PC-3 (cell line): ENCODE measurements at regions of chr3 and their contacts with region 1.

Region 1: GRCh38 chr3:170180908-170181879 is at the start of gene PHC3:
- DNase-seq: peak; percentile 93
- ATAC-seq: peak; percentile 81
- H3K4me3 ChIP-seq: peak within 1 kb of the TSS; percentile 75
- H3K27ac ChIP-seq: peak within 1 kb of the TSS; percentile 47
- H3K4me1 ChIP-seq: peaks cover 16% of the 10 kb centered on the region
- H3K27me3 ChIP-seq: no peaks in the 10 kb centered on the region
- CTCF ChIP-seq: no peak
- total RNA-seq, gene PHC3: 7.5 and 16.2 TPM in 2 replicates

Region 2: DNA sequence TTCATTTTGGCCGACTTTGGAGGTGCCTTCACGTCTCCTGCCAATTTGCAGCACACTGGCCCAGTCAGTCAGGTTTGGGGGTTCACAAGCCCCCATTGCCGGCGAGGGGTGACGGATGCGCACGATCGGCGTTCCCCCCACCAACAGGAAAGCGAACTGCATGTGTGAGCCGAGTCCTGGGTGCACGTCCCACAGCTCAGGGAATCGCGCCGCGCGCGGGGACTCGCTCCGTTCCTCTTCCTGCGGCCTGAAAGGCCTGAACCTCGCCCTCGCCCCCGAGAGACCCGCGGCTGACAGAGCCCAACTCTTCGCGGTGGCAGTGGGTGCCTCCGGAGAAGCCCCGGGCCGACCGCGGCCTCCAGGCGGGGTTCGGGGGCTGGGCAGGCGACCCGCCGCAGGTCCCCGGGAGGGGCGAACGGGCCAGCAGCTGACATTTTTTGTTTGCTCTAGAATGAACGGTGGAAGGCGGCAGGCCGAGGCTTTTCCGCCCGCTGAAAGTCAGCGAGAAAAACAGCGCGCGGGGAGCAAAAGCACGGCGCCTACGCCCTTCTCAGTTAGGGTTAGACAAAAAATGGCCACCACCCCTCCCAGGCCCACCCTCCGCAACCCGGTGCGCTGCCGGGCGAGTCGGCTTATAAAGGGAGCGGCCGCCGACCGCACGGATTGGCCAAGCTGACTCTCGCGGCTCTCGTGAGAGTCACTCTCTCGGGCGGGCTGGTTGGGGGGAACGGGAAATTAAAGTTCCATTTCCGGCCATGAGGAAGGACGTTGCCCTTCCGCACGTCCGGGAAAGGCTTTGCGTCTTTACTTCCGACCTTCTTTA is 416.5 kb before region 1 on chr3 and contains the start of gene TERC:
- CTCF ChIA-PET with region 1: no interaction called
- POLR2A ChIA-PET with region 1: no interaction called
- intact Hi-C with region 1: loop called (anchors 1 kb)
- DNase-seq: peak; percentile 97
- ATAC-seq: peak; percentile 85
- H3K4me3 ChIP-seq: peak within 1 kb of the TSS; percentile 81
- H3K27ac ChIP-seq: peak within 1 kb of the TSS; percentile 82
- H3K4me1 ChIP-seq: peaks cover 9% of the 10 kb centered on the region
- H3K27me3 ChIP-seq: no peaks in the 10 kb centered on the region
- CTCF ChIP-seq: no peak
- total RNA-seq, gene TERC: 544 and 737 TPM in 2 replicates

Region 3: GRCh38 chr3:170196833-170197232 is 15.6 kb after region 1 on chr3:
- CTCF ChIA-PET with region 1: no interaction called
- POLR2A ChIA-PET with region 1: no interaction called
- intact Hi-C with region 1: no loop called
- DNase-seq: peak; percentile 67
- ATAC-seq: peak; percentile 89
- H3K4me3 ChIP-seq: no peak overlapping the region
- H3K27ac ChIP-seq: no peak overlapping the region
- H3K4me1 ChIP-seq: peaks cover 8% of the 10 kb centered on the region; the same call in 1 of the 2 replicates
- H3K27me3 ChIP-seq: no peaks in the 10 kb centered on the region
- CTCF ChIP-seq: no peak

Region 4: GRCh38 chr3:170221924-170222646 is 40.9 kb after region 1 on chr3 and contains the start of gene PRKCI:
- CTCF ChIA-PET with region 1: no interaction called
- POLR2A ChIA-PET with region 1: interaction called, 3 read pairs
- intact Hi-C with region 1: loop called (anchors 2 kb)
- DNase-seq: peak; percentile 96
- ATAC-seq: peak; percentile 95
- H3K4me3 ChIP-seq: peak within 1 kb of the TSS; percentile 90
- H3K27ac ChIP-seq: peak within 1 kb of the TSS; percentile 79
- H3K4me1 ChIP-seq: peaks cover 7% of the 10 kb centered on the region
- H3K27me3 ChIP-seq: no peaks in the 10 kb centered on the region
- CTCF ChIP-seq: no peak
- total RNA-seq, gene PRKCI: 39.5 and 42.2 TPM in 2 replicates

Region 5: GRCh38 chr3:170277833-170278580 is 96.8 kb after region 1 on chr3:
- CTCF ChIA-PET with region 1: no interaction called
- POLR2A ChIA-PET with region 1: no interaction called
- intact Hi-C with region 1: loop called (anchors 10 kb)
- DNase-seq: no peak
- ATAC-seq: no peak
- H3K4me3 ChIP-seq: no peak overlapping the region
- H3K27ac ChIP-seq: no peak overlapping the region
- H3K4me1 ChIP-seq: no peaks in the 10 kb centered on the region
- H3K27me3 ChIP-seq: no peaks in the 10 kb centered on the region
- CTCF ChIP-seq: no peak

Region 6: DNA sequence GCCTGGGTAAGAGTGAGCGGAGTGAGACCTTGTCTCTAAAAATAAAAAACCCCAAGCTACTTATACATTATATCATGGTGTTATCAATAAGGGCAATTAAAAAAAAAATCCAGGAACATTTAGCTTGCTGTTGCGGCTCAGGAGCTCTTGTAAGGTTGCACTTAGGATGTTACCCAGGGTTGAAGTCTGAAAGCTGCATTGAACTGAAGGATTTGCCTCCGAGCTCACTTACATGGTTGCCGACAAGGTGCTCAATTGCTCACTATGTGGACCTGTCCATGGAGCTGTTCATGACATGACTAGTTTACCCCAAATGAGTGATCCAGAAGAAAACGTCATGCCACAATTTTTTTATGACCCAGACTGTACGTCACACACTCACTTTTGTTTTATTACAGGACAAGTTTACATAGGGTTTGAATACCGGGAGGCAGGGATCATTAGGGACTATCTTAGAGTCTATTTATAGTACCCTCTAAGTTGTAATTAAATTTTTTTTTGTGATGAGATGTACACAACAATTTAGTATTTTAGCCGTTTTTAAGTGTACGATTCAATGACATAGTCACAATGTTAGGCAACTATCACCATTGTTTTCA is 216.5 kb after region 1 on chr3:
- CTCF ChIA-PET with region 1: no interaction called
- POLR2A ChIA-PET with region 1: no interaction called
- intact Hi-C with region 1: no loop called
- DNase-seq: no peak
- ATAC-seq: no peak
- H3K4me3 ChIP-seq: no peak overlapping the region
- H3K27ac ChIP-seq: no peak overlapping the region
- H3K4me1 ChIP-seq: no peaks in the 10 kb centered on the region
- H3K27me3 ChIP-seq: no peaks in the 10 kb centered on the region
- CTCF ChIP-seq: no peak